ENCODE measurements at regions of chr5 and their contacts with region 1.

Region 1: DNA sequence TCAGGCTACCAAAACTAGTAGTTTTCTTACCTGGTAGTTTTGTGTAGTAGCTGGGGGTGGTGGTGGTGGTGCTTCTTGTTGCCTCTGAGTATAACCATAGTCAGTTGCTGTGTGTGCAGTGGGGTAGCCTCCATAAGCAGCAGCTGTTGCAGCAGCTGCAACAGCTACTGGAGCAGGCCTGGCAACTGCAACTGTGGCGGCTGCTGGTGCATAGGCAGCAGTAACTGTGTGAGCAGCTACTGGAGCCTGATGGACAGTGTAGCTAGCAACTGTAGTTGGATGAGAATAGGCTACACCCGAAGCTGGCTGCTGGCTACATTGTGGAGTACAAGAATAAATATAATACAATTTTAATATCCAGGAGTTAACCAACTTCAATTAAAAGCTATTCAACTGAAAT is 24.7 kb downstream of the ZFR start:
- DNase-seq: no peak
- ATAC-seq: no peak
- H3K4me3 ChIP-seq: no peak overlapping the region
- H3K4me1 ChIP-seq: no peaks in the 10 kb centered on the region
- CTCF ChIP-seq: no peak

Region 2: GRCh38 chr5:32501071-32502002 is 81.5 kb after region 1 on chr5:
- intact Hi-C with region 1: no loop called
- DNase-seq: no peak
- ATAC-seq: no peak
- H3K4me3 ChIP-seq: no peak overlapping the region
- H3K4me1 ChIP-seq: no peaks in the 10 kb centered on the region
- CTCF ChIP-seq: no peak

Region 3: DNA sequence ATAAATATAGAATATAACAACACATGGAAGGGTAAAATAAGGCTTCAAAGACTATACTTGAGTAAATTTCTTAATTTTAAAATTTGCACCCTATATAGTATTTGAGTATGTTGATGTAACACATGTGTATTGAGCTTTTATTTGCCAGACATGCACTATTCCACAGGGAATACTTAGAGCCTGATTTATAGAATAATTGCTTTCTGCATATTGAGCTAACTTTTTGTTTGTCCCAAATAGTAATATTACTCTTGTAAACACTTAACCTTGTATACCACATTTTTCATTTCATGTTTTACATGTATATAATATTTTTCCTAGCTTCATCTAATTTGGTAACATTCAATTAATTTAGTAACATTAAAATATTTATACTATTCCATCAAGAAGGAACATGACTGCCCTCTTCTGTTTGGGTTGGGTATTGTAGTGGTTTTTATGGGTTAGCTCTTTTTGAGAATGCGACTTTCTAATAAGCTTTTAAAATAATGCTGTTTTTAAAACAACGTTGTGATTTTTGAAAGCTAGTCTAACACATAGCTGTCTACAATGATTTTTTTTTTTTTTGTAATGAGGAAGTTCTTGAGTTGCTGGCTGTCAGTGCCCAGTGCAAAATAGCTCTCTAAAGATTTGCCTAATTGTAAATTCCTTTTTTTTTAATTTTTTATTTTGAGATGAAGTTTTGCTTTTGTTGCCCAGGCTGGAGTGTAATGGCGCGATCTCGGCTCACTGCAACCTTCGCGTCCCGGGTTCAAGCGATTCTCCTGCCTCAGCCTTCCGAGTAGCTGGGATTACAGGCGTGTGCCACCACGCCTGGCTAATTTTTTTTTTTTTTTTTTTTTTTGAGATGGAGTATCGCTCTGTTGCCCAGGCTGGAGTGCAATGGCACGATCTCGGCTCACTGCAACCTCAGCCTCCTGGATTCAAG is 170.4 kb after region 1 on chr5:
- intact Hi-C with region 1: loop called in 1 of 2 experiments (anchors 10 kb)
- DNase-seq: peak in 1 of 3 donors; percentile 84
- ATAC-seq: no peak
- H3K4me3 ChIP-seq: no peak overlapping the region
- H3K4me1 ChIP-seq: peaks cover 21% of the 10 kb centered on the region
- CTCF ChIP-seq: peak; percentile 51

Region 4: DNA sequence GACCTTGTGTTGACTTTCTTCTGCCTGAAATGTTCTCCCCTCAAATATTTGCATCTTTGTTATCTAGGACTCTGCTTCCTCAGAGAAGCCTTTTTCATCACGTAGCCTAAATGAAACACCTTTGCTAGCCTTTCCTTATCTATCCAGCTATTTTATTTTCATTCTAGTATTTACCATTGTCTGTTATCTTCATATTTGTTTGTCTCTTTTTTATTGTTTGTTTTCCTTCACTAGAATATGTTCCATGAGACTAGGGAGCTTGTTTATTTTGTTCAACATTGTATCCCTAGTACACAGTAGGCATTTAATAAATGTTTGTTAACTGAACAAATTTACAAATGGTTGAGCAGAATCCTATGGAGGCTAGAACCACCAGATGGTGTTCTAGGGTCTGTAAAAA is 469.3 kb after region 1 on chr5:
- intact Hi-C with region 1: no loop called
- DNase-seq: no peak
- ATAC-seq: no peak
- H3K4me3 ChIP-seq: no peak overlapping the region
- H3K4me1 ChIP-seq: no peaks in the 10 kb centered on the region
- CTCF ChIP-seq: no peak